ENCODE measurements at regions of chr17 and their contacts with region 1.

Region 1: DNA sequence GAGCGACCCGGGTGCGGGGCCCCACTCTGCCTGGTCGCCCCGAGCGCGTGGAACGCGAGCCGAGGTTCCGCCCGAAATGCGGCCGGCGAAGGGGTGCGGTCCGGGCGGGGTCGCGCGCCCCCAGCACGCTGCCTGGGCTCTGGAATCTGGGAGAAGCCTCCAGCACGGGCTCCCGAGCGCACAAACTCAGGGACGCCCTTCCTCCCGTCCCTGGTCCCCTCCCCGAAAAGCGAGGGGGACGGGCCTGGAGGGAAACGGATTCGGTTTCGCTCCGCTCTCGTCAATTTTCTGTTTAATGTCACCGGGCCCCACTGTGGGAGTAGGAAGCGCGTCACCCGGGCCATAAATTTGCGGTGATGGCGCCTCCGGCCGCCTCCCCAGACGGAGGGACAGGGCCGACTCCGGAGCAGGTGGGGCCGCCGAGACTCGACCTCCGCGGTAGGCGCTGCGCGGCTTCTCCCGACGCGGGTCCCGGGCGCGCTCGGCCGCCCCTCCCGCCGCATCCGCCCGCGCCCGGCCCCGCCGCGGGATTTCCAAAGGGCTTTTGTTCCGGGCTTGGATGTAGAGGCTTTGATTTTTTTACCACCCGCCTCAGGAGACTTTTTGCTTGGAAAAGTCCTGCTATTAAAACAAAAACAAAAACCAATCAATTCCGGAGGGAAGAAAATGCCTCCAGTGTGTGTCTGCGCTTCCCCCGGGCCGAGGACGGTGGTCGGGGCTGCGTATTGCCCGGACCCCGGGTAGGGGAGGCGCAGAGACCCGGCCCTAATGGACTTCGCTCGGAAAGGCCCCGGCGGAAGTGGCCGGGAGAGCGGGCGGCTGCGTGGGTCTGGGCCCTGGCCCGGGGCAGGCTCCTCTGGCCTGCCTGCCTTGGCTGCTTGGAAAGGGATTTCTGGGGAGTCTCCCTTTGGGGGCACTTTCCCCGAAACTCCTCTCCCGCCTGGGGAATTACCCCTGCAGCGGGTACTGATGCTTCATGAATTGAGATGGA is 7.9 kb upstream of the BAHCC1 start:
- DNase-seq: peak; percentile 44
- H3K4me3 Mint-ChIP-seq: peak overlapping the region; percentile 74
- H3K27ac Mint-ChIP-seq: peak overlapping the region; percentile 71
- H3K4me1 Mint-ChIP-seq: no peaks in the 10 kb centered on the region
- H3K27me3 Mint-ChIP-seq: peaks cover 41% of the 10 kb centered on the region

Region 2: DNA sequence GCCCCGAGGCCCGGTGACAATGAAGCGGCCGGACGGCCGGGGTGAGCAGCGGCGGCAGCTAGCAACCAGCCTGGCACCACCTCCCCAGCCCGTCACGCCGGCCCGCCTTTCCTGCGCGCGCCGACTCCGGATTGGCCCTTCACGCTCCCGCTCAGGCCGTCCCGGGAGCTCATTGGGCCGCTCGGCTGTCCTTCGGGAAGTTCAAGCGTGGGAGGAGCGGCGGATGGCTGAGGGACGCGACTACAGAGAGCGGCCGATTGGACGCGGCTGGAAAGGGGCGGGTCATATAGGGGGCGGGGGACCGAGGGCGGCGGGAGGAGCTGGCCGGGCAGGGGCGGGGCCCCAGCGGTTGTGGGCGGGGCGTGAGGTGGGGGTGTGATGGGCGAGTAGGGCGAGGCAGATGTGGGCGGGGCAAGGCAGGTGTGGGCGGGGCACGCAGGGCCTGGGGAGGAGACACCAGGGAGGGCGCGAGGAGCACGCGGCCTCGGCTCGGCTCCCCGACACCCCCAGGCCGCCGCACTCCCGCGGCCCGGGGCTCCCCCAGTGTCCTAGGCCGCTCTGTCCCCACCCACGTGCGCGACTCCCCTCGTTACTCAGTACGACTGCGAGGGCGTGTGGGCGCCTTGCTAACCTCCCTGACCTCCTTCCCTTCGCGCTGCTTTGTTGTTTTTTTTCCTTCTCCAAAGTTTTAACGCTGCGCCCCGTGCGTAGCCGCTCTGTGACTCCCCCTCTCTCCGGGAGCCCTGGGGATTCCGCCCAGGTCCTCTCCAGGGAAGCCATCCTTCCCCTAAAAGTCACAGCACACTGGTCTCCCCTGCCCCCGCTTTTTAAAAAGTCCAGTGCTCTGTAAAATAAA is 164.3 kb before region 1 on chr17 and contains the start of gene CEP131:
- intact Hi-C with region 1: no loop called
- DNase-seq: peak; percentile 98
- H3K4me3 Mint-ChIP-seq: peak within 1 kb of the TSS; percentile 79
- H3K27ac Mint-ChIP-seq: peak within 1 kb of the TSS; percentile 80
- H3K4me1 Mint-ChIP-seq: peaks cover 20% of the 10 kb centered on the region
- H3K27me3 Mint-ChIP-seq: no peaks in the 10 kb centered on the region
- total RNA-seq, gene CEP131: 17.5 and 18.7 TPM in 2 replicates

Region 3: DNA sequence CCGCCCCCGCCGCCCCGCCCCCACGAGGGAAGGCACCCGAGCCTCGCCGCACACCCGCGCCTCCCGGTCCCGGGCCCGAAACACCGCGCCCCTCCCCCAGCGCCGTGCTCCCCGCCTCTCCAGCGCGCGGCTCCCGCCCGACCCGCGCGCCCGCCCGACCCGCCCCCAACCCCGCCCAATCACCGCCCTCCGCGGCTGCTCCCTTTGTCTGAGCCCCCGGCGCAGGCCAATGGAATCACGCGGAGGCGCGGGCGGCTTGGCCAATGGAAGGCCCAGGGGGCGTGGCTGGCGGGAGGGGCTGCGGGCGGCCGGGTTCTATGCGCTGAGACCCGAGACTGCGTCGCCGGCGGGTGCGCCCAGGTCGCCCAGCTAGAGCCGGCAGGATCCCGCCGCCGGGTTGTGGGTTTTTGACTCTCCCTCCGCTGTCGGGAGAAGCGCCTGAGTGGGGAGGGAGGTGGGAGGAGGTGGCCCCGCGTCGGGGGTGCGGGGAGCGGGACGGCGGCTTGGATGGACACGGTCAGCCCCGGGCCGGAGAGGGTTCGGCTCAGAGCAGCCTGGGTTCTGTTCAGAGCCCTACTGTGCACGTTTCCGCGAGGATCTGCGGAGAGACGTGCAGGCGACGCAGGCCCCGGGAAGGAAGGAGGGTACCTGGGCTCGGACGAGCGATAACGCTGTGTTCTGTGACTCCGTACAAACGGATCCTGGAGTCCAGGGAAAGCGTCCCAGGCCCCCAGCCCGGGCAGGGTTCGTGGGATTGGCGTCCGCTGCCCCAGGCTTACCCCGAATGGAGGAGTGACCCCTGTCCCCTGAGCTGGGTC is 41.1 kb before region 1 on chr17:
- intact Hi-C with region 1: loop called (anchors 2 kb)
- DNase-seq: peak; percentile 93
- H3K4me3 Mint-ChIP-seq: peak overlapping the region; percentile 39
- H3K27ac Mint-ChIP-seq: no peak overlapping the region
- H3K4me1 Mint-ChIP-seq: peaks cover 6% of the 10 kb centered on the region
- H3K27me3 Mint-ChIP-seq: peaks cover 49% of the 10 kb centered on the region